Panc1 (cell line): ENCODE measurements at regions of chr11 and their contacts with region 1.

Region 1: DNA sequence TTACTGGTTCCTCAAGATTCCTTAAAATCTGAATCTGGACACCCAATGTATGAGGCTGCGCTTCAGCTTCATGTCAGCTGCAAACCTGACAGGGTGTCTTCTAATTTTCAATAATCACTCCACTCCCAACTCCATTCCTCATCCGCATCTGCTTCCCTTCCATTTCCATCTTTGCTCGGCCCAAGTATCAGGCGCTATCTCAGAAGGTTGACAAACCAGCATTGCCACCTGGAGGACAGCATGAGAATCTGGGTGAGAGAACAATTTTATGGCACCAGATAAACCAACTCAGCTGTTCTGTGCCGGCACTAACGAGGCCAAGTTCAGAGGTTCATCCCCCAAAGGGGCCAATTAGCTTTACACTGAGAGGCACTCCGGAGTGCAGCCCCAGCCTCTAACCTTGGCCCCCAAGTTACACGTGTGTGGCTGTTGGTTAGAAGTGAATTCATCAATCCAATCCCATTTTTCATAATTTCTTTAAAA is 79.1 kb upstream of the LMO2 start:
- DNase-seq: peak; percentile 25
- ATAC-seq: peak; percentile 94
- H3K4me3 ChIP-seq: no peak overlapping the region
- H3K27ac ChIP-seq: no peak overlapping the region
- H3K4me1 ChIP-seq: no peaks in the 10 kb centered on the region
- H3K27me3 ChIP-seq: no peaks in the 10 kb centered on the region
- CTCF ChIP-seq: peak; percentile 82

Region 2: DNA sequence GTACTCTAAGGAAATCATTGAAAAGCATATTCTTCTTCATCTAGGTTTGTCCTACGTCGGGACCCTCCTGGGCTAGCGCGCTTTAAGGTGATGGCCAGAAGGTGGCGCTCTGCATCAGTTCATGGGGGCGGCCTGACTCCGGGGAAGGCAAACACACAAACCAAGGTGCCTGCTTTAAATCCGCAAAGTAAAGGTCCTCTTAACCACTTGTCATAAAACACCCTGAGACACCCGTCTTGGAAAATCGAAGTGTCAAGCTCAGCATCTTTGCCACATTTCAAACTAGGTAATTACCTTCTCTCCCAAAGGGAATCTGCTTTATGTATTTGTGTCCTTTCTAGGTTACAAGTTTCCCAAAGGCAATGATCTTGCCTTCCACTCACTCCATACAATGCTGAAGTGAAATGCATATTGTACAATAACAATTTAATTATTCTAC is 113.1 kb before region 1 on chr11:
- CTCF ChIA-PET with region 1: interaction called, 12 read pairs
- POLR2A ChIA-PET with region 1: no interaction called
- in situ Hi-C with region 1: no loop called
- intact Hi-C with region 1: loop called (anchors 1 kb)
- DNase-seq: peak; percentile 20
- ATAC-seq: peak; percentile 91
- H3K4me3 ChIP-seq: no peak overlapping the region
- H3K27ac ChIP-seq: no peak overlapping the region
- H3K4me1 ChIP-seq: no peaks in the 10 kb centered on the region
- H3K27me3 ChIP-seq: peaks cover 20% of the 10 kb centered on the region
- CTCF ChIP-seq: peak; percentile 93

Region 3: GRCh38 chr11:33942954-33943353 is 28.1 kb before region 1 on chr11:
- CTCF ChIA-PET with region 1: no interaction called
- POLR2A ChIA-PET with region 1: interaction called, 24 read pairs
- in situ Hi-C with region 1: no loop called
- intact Hi-C with region 1: no loop called
- DNase-seq: no peak
- ATAC-seq: no peak
- H3K4me3 ChIP-seq: no peak overlapping the region
- H3K27ac ChIP-seq: no peak overlapping the region
- H3K4me1 ChIP-seq: no peaks in the 10 kb centered on the region
- H3K27me3 ChIP-seq: no peaks in the 10 kb centered on the region; the same call in 1 of the 2 replicates
- CTCF ChIP-seq: no peak